ENCODE measurements at regions of chr3 and their contacts with region 1.

Region 1: DNA sequence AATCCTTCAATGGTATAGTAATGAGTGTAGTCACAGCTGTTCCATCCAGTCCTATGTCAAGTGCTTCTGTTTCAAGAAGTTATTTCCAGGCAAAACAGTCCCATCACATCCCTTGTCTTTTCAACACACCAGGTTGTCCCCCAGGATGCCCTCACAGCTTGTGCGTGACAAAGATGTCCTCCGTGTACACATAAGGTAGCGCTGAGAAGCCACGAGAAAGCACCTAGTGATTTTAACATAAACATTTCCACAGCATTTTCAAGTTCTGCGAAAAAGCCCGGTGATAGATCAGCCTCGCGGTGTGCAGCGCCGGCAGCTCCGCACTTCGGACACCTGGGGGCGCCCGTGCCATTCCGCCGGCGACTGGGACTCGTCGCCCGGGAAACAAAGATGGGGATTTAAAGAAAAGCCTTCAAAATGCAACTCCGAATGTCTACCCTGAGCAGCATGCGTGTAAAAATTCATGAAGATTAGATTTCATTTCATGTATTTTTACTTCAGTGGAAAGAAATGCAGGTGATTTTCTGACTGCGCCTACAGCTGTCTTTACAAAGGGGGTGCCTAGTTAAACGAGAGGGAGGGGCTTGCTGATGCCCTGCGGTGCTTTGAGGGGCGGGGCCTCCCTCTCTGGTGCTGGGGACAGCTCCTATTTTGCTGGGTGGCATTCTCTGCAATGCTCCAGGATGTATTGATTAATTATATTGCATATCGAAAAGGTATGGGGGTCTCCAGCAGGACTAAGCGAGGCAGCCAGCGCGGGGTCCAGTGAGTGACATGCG is 49.9 kb downstream of the KY start:
- DNase-seq: peak; percentile 59 to 83 (median 83)
- H3K4me3 ChIP-seq: peak overlapping the region in 2 of 7 experiments; percentile 14 to 43
- H3K27ac ChIP-seq: no peak overlapping the region
- H3K4me1 ChIP-seq: peaks cover 0 to 44% (median 20%) of the 10 kb centered on the region in 4 experiments
- H3K27me3 ChIP-seq: no peaks in the 10 kb centered on the region

Region 2: GRCh38 chr3:134618478-134619300 is 17.8 kb after region 1 on chr3:
- CTCF ChIA-PET with region 1: interaction called, 27 read pairs
- POLR2A ChIA-PET with region 1: no interaction called
- DNase-seq: no peak
- H3K4me3 ChIP-seq: no peak overlapping the region
- H3K27ac ChIP-seq: no peak overlapping the region
- H3K4me1 ChIP-seq: peaks cover 0 to 23% (median 6%) of the 10 kb centered on the region in 4 experiments
- H3K27me3 ChIP-seq: no peaks in the 10 kb centered on the region

Region 3: DNA sequence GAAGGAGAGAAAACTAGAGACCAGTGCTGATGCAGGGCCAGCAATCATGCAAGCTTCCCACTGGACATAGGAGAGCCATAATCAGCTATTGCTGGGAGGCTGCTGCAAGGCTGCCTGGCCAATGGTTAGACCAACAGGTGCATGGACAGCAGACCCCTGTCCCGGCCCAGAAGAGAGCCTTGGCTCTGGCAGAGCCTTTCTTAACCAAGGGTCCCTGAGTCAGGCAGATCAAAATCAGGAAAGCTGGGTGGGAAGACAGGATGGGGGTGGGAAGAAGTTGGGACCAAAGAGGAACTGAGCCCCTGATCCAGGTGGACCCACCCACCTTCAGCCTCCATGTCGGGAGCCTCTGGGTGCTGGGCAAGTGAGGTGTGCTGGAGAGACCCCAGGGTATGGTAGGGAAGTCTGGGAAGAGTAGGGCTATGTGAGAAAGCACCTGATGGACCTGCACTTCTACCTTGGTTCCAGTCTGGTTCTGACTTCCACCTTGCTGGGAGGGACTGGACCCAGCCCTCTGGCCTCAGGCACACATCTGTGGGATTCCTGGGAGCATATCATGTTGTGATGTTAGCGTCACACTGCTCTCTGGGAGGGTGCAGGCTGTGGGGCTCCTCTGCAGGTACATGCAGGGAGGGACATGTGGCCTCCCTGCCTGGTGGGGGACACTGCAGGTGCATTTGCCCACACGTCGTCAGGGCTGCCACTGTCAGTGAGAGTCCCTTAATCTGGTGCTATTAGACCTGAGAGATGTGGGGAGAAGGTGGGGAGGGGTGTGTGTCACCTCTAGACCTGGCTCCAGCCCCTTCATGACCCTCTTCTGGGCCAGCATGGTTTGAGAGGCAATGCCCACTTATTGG is 25.2 kb after region 1 on chr3:
- CTCF ChIA-PET with region 1: interaction called, 27 read pairs
- POLR2A ChIA-PET with region 1: no interaction called
- DNase-seq: no peak
- H3K4me3 ChIP-seq: no peak overlapping the region
- H3K27ac ChIP-seq: no peak overlapping the region
- H3K4me1 ChIP-seq: peaks cover 0 to 13% (median under 1%) of the 10 kb centered on the region in 4 experiments
- H3K27me3 ChIP-seq: no peaks in the 10 kb centered on the region

Region 4: GRCh38 chr3:134640872-134641470 is 40.1 kb after region 1 on chr3:
- CTCF ChIA-PET with region 1: interaction called, 238 read pairs
- POLR2A ChIA-PET with region 1: no interaction called
- DNase-seq: peak; percentile 63 to 80 (median 72)
- H3K4me3 ChIP-seq: no peak overlapping the region
- H3K27ac ChIP-seq: no peak overlapping the region
- H3K4me1 ChIP-seq: peaks cover 0 to 2% (median 0%) of the 10 kb centered on the region in 4 experiments
- H3K27me3 ChIP-seq: no peaks in the 10 kb centered on the region

Region 5: DNA sequence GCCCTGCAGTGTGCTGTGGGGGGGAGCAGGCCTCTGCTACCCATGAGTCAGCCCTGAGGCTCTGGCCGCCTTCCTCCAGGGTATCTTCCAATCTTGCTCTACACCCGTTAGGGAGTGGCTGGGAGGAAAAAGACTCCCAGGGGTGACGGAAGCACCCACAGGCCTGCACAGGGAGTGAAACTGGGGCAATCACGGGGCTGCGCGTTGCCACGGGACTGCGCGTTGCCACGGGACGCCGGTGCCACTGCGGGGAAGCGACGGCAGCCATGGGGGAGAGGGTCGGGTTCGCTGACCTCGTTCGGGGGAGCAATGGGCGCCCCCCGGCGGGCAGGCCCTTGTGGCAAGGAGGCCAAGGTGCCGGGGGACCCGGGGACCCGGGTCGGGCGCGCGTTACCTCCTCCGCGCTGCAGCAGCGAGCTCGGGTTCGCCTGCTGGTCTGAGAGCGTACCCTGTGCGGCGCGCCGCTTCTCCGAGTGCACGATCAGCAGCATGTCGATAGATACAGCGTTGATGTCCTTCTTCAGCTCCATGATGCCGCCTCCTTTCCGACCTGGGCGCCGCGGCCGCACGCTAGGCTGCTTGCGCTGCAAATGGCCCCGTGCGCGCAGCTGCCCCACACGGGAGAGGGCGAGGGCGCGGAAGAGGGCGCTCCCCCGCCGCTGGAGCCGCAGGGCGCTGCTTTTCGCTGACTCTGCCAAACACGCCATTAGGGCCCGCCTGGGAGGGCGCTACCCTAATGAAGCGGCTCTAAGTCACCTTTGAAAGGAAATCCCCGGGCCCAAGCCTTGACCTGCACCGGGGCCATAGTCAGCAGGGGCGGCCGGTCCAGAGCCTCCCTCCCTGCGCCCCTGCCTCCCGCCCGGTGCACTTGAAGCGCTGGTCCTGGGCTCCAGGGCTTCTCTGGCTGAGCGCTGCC is 49.8 kb after region 1 on chr3 and contains the start of gene KY:
- CTCF ChIA-PET with region 1: interaction called, 238 read pairs
- POLR2A ChIA-PET with region 1: no interaction called
- DNase-seq: peak; percentile 55 to 81 (median 72)
- H3K4me3 ChIP-seq: peak within 1 kb of the TSS; percentile 31 to 79 (median 59)
- H3K27ac ChIP-seq: no peak within 1 kb of the TSS
- H3K4me1 ChIP-seq: peaks cover 4 to 17% (median 14%) of the 10 kb centered on the region in 4 experiments
- H3K27me3 ChIP-seq: peaks cover 0 to 16% (median 10%) of the 10 kb centered on the region in 5 experiments

Region 6: GRCh38 chr3:134754768-134755559 is 154.1 kb after region 1 on chr3:
- CTCF ChIA-PET with region 1: interaction called, 15 read pairs
- POLR2A ChIA-PET with region 1: no interaction called
- DNase-seq: peak; percentile 39 to 60 (median 46)
- H3K4me3 ChIP-seq: no peak overlapping the region
- H3K27ac ChIP-seq: no peak overlapping the region
- H3K4me1 ChIP-seq: no peaks in the 10 kb centered on the region
- H3K27me3 ChIP-seq: peaks cover 0 to under 1% (median 0%) of the 10 kb centered on the region in 5 experiments

Measured in common myeloid progenitor, CD34-positive (primary cell).